HAP-1 (cell line): ENCODE measurements at regions of chr3 and their contacts with region 1.

Region 1: GRCh38 chr3:108477511-108478147 is 32.8 kb downstream of the MYH15 start:
- DNase-seq: peak; percentile 80 to 84
- H3K4me3 ChIP-seq: no peak overlapping the region
- H3K4me1 ChIP-seq: peaks cover 4% of the 10 kb centered on the region
- H3K27me3 ChIP-seq: no peaks in the 10 kb centered on the region

Region 2: DNA sequence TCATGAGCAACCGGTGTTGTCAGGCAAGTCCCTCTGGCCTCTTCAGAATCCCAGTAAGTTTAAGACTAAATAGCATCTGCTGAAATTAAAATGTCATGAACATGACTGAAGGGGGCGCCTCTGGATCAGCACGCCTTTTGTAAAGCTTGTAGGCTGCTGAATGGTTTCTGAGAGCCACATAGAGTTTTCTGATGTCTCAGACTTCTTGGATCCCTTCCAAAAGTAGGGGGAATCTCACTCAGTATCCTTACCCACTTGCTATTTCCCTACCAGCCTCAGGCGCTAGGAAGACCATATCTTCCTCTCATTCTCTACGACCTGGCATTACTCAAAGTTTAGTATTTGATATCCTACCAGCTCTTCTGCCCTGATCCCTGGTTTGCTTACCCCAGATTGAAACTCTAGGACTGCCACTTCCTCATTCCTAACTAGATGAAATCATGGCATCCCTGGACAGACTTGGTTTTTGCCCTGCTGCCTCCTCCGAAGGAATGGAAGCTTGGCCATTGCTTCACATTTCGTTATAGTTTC is 324.1 kb before region 1 on chr3:
- in situ Hi-C with region 1: loop called (anchors 10 kb)
- DNase-seq: peak; percentile 58 to 74
- H3K4me3 ChIP-seq: no peak overlapping the region
- H3K4me1 ChIP-seq: no peaks in the 10 kb centered on the region
- H3K27me3 ChIP-seq: no peaks in the 10 kb centered on the region

Region 3: GRCh38 chr3:108914774-108915641 is 437.4 kb after region 1 on chr3:
- in situ Hi-C with region 1: loop called (anchors 25 kb)
- DNase-seq: peak; percentile 69 to 80
- H3K4me3 ChIP-seq: no peak overlapping the region
- H3K4me1 ChIP-seq: no peaks in the 10 kb centered on the region
- H3K27me3 ChIP-seq: peaks cover 2% of the 10 kb centered on the region; the same call in 1 of the 2 replicates